ENCODE measurements at regions of chr14 and their contacts with region 1.

Region 1: DNA sequence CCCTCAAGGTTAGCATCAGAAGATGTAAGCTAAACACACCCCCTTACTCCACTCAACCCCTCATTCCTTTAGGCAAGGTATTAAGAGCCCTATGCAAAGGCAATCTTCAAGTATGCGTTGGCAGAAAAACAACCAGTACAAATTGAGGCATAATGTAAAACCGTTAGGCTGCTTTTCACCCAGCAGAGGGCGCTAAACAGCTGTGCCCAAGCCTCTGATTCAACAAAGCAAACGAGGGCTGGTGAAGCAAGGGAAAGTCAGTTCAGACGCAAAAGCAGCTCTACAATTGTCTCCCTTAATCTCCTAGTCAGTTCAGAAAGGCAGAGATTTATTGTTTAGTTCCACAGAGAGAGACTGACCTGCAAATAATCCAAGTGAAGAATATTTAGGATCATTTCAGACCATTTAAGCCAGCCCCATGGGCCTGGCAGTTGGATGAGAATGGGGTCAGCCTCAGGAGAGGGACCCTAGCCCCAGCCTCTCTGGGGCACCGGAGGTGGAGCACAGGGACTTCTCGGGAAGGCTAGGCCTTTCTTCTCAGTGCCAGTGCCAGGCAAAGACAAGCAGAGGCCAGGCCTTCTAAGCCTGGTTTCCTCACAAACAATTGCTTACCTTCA is 23.5 kb downstream of the DCAF5 start:
- DNase-seq: peak; percentile 79
- ATAC-seq: peak; percentile 75
- H3K4me3 ChIP-seq: no peak overlapping the region
- H3K4me3 Mint-ChIP-seq: no peak overlapping the region
- H3K27ac ChIP-seq: no peak overlapping the region
- H3K27ac Mint-ChIP-seq: no peak overlapping the region
- H3K4me1 ChIP-seq: no peaks in the 10 kb centered on the region
- H3K4me1 Mint-ChIP-seq: peaks cover 49% of the 10 kb centered on the region
- H3K27me3 ChIP-seq: no peaks in the 10 kb centered on the region
- H3K27me3 Mint-ChIP-seq: no peaks in the 10 kb centered on the region
- CTCF ChIP-seq: peak; percentile 94

Region 2: DNA sequence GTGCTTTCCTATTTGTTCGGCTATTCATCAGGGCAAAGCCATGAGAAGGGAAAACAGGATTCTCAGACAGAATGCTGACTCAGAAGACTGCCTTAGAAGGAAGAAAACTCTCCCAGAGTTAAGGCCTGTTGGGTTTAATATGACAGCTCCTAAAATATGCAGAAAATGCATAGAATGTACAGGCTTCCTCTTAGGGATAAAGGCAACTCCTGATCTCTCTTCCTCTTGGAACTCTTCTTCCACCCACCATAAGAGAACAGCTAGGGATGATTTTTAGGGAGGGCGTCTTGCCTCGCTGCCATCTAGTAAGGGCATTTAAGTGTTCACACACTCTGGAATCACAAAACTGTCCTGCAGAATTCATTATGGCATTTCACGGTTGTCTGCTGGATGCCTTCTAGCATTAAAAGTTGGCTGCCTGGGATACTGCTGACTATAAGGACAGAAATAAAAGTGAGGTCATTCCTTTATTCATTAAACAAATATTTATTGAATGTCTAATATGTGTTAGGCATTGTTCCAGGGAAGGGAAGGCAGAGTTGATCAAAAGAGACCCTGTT is 50.1 kb before region 1 on chr14:
- CTCF ChIA-PET with region 1: no interaction called
- POLR2A ChIA-PET with region 1: no interaction called
- intact Hi-C with region 1: no loop called
- DNase-seq: no peak
- ATAC-seq: no peak
- H3K4me3 ChIP-seq: no peak overlapping the region
- H3K4me3 Mint-ChIP-seq: no peak overlapping the region
- H3K27ac ChIP-seq: no peak overlapping the region
- H3K27ac Mint-ChIP-seq: no peak overlapping the region
- H3K4me1 ChIP-seq: no peaks in the 10 kb centered on the region
- H3K4me1 Mint-ChIP-seq: no peaks in the 10 kb centered on the region
- H3K27me3 ChIP-seq: no peaks in the 10 kb centered on the region
- H3K27me3 Mint-ChIP-seq: no peaks in the 10 kb centered on the region
- CTCF ChIP-seq: no peak

Region 3: DNA sequence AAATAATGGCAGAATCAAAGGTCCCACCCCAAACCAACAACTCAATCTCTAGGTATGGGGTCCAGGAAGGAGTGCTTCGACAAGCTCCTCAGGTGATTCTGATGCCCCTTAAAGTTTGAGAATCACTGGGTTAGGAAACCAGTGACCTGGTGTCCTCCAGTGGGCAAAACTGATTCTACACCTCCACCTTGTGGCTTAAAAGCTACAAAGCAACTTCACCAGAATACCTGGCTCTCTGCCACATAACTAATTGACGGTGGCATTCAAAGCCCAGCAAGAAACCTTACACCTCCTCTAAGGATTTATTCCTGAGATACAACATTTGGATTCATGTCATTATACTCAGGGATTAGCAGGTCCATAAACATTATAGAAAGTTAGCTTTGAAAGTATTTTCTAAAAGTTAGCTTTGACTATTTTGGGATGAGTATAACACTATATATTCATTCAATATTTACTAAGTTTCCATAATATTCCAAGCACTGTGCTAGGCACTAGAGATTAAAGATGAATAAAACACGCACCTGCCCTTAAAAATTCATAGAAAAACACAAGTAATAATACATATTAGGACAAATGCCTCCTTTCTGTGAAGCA is 21.9 kb before region 1 on chr14:
- CTCF ChIA-PET with region 1: interaction called, 12 read pairs
- POLR2A ChIA-PET with region 1: no interaction called
- intact Hi-C with region 1: no loop called
- DNase-seq: peak; percentile 44
- ATAC-seq: no peak
- H3K4me3 ChIP-seq: no peak overlapping the region
- H3K4me3 Mint-ChIP-seq: no peak overlapping the region
- H3K27ac ChIP-seq: no peak overlapping the region
- H3K27ac Mint-ChIP-seq: no peak overlapping the region
- H3K4me1 ChIP-seq: no peaks in the 10 kb centered on the region
- H3K4me1 Mint-ChIP-seq: no peaks in the 10 kb centered on the region
- H3K27me3 ChIP-seq: no peaks in the 10 kb centered on the region
- H3K27me3 Mint-ChIP-seq: no peaks in the 10 kb centered on the region
- CTCF ChIP-seq: peak; percentile 64

Region 4: DNA sequence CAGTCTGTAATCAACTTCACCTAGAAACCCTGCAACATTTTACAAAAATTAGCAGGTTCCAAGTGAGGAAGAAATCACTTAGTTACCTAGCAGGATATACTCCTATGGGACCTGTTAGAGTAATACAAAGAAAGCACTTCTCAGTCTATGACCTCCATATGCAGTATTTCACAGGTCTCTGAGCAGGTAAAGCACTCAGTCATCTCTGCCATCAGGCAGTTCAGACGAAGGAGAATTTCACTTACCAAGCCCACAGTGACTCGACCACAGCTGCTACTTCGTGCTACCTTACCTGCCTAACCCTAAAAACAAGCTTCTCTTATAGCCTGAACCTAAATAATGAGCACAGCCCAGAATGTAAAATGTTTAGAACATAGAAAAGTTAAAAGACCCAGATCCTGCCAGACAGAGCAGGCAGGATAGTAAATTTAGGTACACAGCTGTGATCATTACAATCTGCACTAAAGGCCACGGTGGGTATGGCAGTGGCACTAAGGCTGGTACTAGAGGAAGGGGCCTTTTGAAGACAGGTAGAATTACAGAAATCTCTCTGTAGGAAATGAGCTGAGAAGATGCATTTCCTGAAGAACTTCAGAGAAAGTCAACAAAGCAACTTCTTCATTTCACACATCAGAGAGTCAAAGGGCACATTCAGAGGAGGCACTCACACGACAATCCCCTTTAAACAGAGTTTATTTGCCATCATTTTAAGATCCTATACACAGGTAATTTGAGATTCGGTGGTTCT is 12.2 kb before region 1 on chr14:
- CTCF ChIA-PET with region 1: interaction called, 20 read pairs
- POLR2A ChIA-PET with region 1: interaction called, 9 read pairs
- intact Hi-C with region 1: no loop called
- DNase-seq: no peak
- ATAC-seq: no peak
- H3K4me3 ChIP-seq: no peak overlapping the region
- H3K4me3 Mint-ChIP-seq: no peak overlapping the region
- H3K27ac ChIP-seq: peak overlapping the region in 1 of 2 donors; percentile 57
- H3K27ac Mint-ChIP-seq: peak overlapping the region; percentile 62
- H3K4me1 ChIP-seq: peaks cover 3 to 12% of the 10 kb centered on the region in 2 donors
- H3K4me1 Mint-ChIP-seq: peaks cover 21% of the 10 kb centered on the region
- H3K27me3 ChIP-seq: no peaks in the 10 kb centered on the region
- H3K27me3 Mint-ChIP-seq: no peaks in the 10 kb centered on the region
- CTCF ChIP-seq: no peak

Region 5: GRCh38 chr14:69153131-69153872 is 23.9 kb after region 1 on chr14:
- CTCF ChIA-PET with region 1: interaction called, 15 read pairs
- POLR2A ChIA-PET with region 1: no interaction called
- intact Hi-C with region 1: loop called (anchors 2 kb)
- DNase-seq: peak; percentile 95
- ATAC-seq: peak; percentile 92
- H3K4me3 ChIP-seq: peak overlapping the region; percentile 21 to 94 (median 92)
- H3K4me3 Mint-ChIP-seq: peak overlapping the region; percentile 89
- H3K27ac ChIP-seq: peak overlapping the region; percentile 56 to 72
- H3K27ac Mint-ChIP-seq: peak overlapping the region; percentile 95
- H3K4me1 ChIP-seq: peaks cover 9 to 21% of the 10 kb centered on the region in 2 donors
- H3K4me1 Mint-ChIP-seq: peaks cover 32% of the 10 kb centered on the region
- H3K27me3 ChIP-seq: no peaks in the 10 kb centered on the region
- H3K27me3 Mint-ChIP-seq: peaks cover 3% of the 10 kb centered on the region
- CTCF ChIP-seq: no peak

Region 6: GRCh38 chr14:69170839-69171238 is 41.5 kb after region 1 on chr14:
- CTCF ChIA-PET with region 1: no interaction called
- POLR2A ChIA-PET with region 1: no interaction called
- intact Hi-C with region 1: no loop called
- DNase-seq: no peak
- ATAC-seq: no peak
- H3K4me3 ChIP-seq: no peak overlapping the region
- H3K4me3 Mint-ChIP-seq: no peak overlapping the region
- H3K27ac ChIP-seq: no peak overlapping the region
- H3K27ac Mint-ChIP-seq: no peak overlapping the region
- H3K4me1 ChIP-seq: no peaks in the 10 kb centered on the region
- H3K4me1 Mint-ChIP-seq: no peaks in the 10 kb centered on the region
- H3K27me3 ChIP-seq: peaks cover 0 to 4% (median under 1%) of the 10 kb centered on the region in 4 experiments
- H3K27me3 Mint-ChIP-seq: peaks cover 22% of the 10 kb centered on the region
- CTCF ChIP-seq: no peak

Region 7: GRCh38 chr14:69191340-69192111 is 62.2 kb after region 1 on chr14 and contains the start of gene EXD2:
- CTCF ChIA-PET with region 1: interaction called, 3 read pairs
- POLR2A ChIA-PET with region 1: no interaction called
- intact Hi-C with region 1: loop called (anchors 1 kb)
- DNase-seq: peak; percentile 83
- ATAC-seq: peak; percentile 82
- H3K4me3 ChIP-seq: peak within 1 kb of the TSS; percentile 55 to 75 (median 62)
- H3K4me3 Mint-ChIP-seq: peak within 1 kb of the TSS; percentile 95
- H3K27ac ChIP-seq: peak within 1 kb of the TSS; percentile 28 to 70
- H3K27ac Mint-ChIP-seq: peak within 1 kb of the TSS; percentile 90
- H3K4me1 ChIP-seq: peaks cover 4 to 7% of the 10 kb centered on the region in 2 donors
- H3K4me1 Mint-ChIP-seq: peaks cover 14% of the 10 kb centered on the region
- H3K27me3 ChIP-seq: no peaks in the 10 kb centered on the region
- H3K27me3 Mint-ChIP-seq: peaks cover 7% of the 10 kb centered on the region
- CTCF ChIP-seq: no peak
- total RNA-seq, gene EXD2: 10.0 and 10.2 TPM in 2 replicates

Region 8: DNA sequence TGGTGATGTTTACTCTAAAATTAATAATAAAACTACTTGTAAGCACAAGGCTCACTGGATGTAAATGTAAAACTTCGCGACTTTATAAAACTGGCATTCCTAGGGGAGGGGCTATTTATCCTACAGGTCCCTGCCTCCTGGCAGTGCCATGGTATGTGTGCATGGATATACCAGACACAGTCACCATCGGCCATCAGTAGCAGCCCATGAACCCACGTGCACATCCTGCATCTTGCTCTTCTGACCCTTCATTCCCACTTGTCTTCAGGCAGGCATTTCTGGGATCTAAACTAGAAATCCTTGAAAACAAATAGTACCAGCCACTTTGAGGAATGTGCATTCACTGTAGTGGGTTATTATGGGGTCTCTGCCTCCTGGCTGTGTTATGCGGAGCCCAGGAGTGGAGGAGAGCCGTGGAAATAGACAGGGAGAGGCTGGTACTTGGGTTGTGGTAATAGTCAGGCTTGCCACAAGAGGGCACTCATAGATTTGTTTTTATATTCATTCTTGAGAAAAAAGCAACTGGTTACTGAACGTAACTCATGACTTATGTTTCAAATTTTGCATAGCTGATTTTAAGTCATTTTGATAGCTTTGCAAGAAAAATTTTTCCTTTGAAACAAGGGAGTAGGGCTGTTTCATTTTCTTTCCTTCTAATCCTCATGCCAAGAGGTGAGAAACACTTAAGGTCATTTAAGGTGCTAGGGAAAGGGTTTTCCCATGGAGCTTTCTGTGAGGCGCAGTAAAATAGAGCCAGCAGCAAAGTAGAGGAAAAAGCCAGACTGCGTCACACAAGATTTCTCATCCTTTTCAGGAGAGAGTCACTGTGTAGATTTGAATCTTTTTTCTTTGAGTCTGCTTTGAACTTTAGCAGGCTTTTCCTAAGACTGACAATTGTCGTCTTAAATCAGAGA is 113.2 kb after region 1 on chr14:
- CTCF ChIA-PET with region 1: interaction called, 18 read pairs
- POLR2A ChIA-PET with region 1: no interaction called
- intact Hi-C with region 1: loop called (anchors 1 kb)
- DNase-seq: peak; percentile 73
- ATAC-seq: peak; percentile 65
- H3K4me3 ChIP-seq: no peak overlapping the region
- H3K4me3 Mint-ChIP-seq: no peak overlapping the region
- H3K27ac ChIP-seq: no peak overlapping the region
- H3K27ac Mint-ChIP-seq: no peak overlapping the region
- H3K4me1 ChIP-seq: no peaks in the 10 kb centered on the region
- H3K4me1 Mint-ChIP-seq: peaks cover 3% of the 10 kb centered on the region
- H3K27me3 ChIP-seq: no peaks in the 10 kb centered on the region
- H3K27me3 Mint-ChIP-seq: no peaks in the 10 kb centered on the region
- CTCF ChIP-seq: peak; percentile 87

Region 9: GRCh38 chr14:69268763-69269162 is 139.4 kb after region 1 on chr14:
- CTCF ChIA-PET with region 1: no interaction called
- POLR2A ChIA-PET with region 1: no interaction called
- intact Hi-C with region 1: no loop called
- DNase-seq: no peak
- ATAC-seq: no peak
- H3K4me3 ChIP-seq: no peak overlapping the region
- H3K4me3 Mint-ChIP-seq: no peak overlapping the region
- H3K27ac ChIP-seq: no peak overlapping the region
- H3K27ac Mint-ChIP-seq: no peak overlapping the region
- H3K4me1 ChIP-seq: no peaks in the 10 kb centered on the region
- H3K4me1 Mint-ChIP-seq: no peaks in the 10 kb centered on the region
- H3K27me3 ChIP-seq: peaks cover 0 to 15% (median 0%) of the 10 kb centered on the region in 4 experiments
- H3K27me3 Mint-ChIP-seq: peaks cover 28% of the 10 kb centered on the region
- CTCF ChIP-seq: no peak

Region 10: GRCh38 chr14:69574263-69574953 is 445.0 kb after region 1 on chr14 and contains the start of gene CCDC177:
- CTCF ChIA-PET with region 1: interaction called, 3 read pairs
- POLR2A ChIA-PET with region 1: no interaction called
- intact Hi-C with region 1: loop called (anchors 1 kb)
- DNase-seq: peak; percentile 82
- ATAC-seq: peak; percentile 85
- H3K4me3 ChIP-seq: peak within 1 kb of the TSS in 4 of 5 experiments; percentile 31 to 72 (median 48)
- H3K4me3 Mint-ChIP-seq: peak within 1 kb of the TSS; percentile 84
- H3K27ac ChIP-seq: no peak within 1 kb of the TSS
- H3K27ac Mint-ChIP-seq: no peak within 1 kb of the TSS
- H3K4me1 ChIP-seq: peaks cover 21 to 26% of the 10 kb centered on the region in 2 donors
- H3K4me1 Mint-ChIP-seq: peaks cover 12% of the 10 kb centered on the region
- H3K27me3 ChIP-seq: peaks cover 0 to 58% (median 27%) of the 10 kb centered on the region in 4 experiments
- H3K27me3 Mint-ChIP-seq: peaks cover 52% of the 10 kb centered on the region
- CTCF ChIP-seq: peak; percentile 99
- total RNA-seq, gene CCDC177: not detected in 2 replicates